ENCODE measurements at regions of chr7 and their contacts with region 1.

Region 1: DNA sequence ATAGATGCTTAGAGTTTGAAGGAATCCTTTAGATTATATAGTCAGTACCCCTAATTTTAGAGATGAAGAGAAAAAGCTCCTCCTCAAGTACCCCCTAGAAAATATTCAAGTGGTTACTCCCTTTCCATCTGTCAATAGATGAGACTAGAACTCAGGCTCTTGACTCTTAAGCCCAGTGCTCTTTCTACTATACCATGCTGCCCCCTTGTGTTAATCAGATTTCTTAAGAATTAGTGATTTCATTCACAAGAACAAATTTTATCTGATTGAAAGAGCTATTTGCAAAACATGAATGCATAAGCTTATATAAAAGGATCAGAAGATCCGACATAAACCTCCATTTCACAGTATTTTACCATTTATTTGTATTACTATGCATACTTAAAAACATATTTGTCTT is 179.3 kb downstream of the TFEC start:
- DNase-seq: peak; percentile 6
- H3K4me3 Mint-ChIP-seq: no peak overlapping the region
- H3K27ac Mint-ChIP-seq: no peak overlapping the region
- H3K4me1 Mint-ChIP-seq: no peaks in the 10 kb centered on the region
- H3K27me3 Mint-ChIP-seq: no peaks in the 10 kb centered on the region
- CTCF ChIP-seq: peak; percentile 41

Region 2: DNA sequence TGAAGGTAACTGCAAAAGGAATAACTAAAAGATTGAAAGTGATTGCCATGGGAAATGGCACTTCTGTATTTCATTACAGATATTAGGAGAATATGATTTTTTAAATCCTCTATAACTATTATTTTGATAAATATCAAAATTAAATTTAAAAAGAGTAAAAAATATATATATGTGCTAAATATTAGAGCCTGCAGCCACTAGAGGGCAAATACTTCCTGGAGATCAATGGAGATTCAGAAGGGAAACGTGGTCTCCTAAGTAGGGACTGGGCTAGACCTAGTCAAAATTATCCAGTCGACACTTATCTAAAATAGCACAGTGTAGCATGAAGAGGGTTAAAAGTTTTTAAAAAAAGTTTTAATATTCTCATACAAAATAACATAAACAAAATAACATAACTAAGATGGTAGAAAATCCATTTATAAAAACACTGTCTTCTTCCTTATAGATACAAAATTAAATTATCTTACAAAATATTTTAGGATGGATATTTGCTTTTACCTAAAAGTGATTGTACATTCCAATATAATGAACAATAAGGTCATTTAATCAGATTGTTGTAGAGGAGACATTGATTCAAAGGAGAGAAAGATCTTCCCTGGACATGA is 495.0 kb before region 1 on chr7:
- CTCF ChIA-PET with region 1: no interaction called
- intact Hi-C with region 1: loop called (anchors 10 kb)
- DNase-seq: peak; percentile 14
- H3K4me3 Mint-ChIP-seq: no peak overlapping the region
- H3K27ac Mint-ChIP-seq: no peak overlapping the region
- H3K4me1 Mint-ChIP-seq: peaks cover 9% of the 10 kb centered on the region
- H3K27me3 Mint-ChIP-seq: no peaks in the 10 kb centered on the region
- CTCF ChIP-seq: peak; percentile 40

Region 3: GRCh38 chr7:115805458-115805857 is 45.8 kb before region 1 on chr7:
- CTCF ChIA-PET with region 1: no interaction called
- intact Hi-C with region 1: no loop called
- DNase-seq: no peak
- H3K4me3 Mint-ChIP-seq: no peak overlapping the region
- H3K27ac Mint-ChIP-seq: no peak overlapping the region
- H3K4me1 Mint-ChIP-seq: no peaks in the 10 kb centered on the region
- H3K27me3 Mint-ChIP-seq: no peaks in the 10 kb centered on the region
- CTCF ChIP-seq: no peak

Region 4: GRCh38 chr7:115910541-115911164 is 59.4 kb after region 1 on chr7:
- CTCF ChIA-PET with region 1: interaction called, 9 read pairs
- intact Hi-C with region 1: loop called (anchors 1 kb)
- DNase-seq: no peak
- H3K4me3 Mint-ChIP-seq: no peak overlapping the region
- H3K27ac Mint-ChIP-seq: no peak overlapping the region
- H3K4me1 Mint-ChIP-seq: peaks cover 5% of the 10 kb centered on the region
- H3K27me3 Mint-ChIP-seq: no peaks in the 10 kb centered on the region
- CTCF ChIP-seq: peak; percentile 46

Region 5: GRCh38 chr7:116122972-116123595 is 271.8 kb after region 1 on chr7:
- CTCF ChIA-PET with region 1: interaction called, 3 read pairs
- intact Hi-C with region 1: loop called (anchors 1 kb)
- DNase-seq: peak; percentile 22
- H3K4me3 Mint-ChIP-seq: no peak overlapping the region
- H3K27ac Mint-ChIP-seq: no peak overlapping the region
- H3K4me1 Mint-ChIP-seq: no peaks in the 10 kb centered on the region
- H3K27me3 Mint-ChIP-seq: no peaks in the 10 kb centered on the region
- CTCF ChIP-seq: peak; percentile 72